CD4-positive, alpha-beta T cell (primary cell): ENCODE measurements at regions of chr19 and their contacts with region 1.

Region 1: GRCh38 chr19:36837906-36838783 is at the start of gene ZNF790:
- DNase-seq: peak; percentile 69 to 91 (median 78)
- ATAC-seq: peak; percentile 88
- H3K4me3 ChIP-seq: peak within 1 kb of the TSS; percentile 66
- H3K4me3 Mint-ChIP-seq: no peak within 1 kb of the TSS
- H3K27ac ChIP-seq: peak within 1 kb of the TSS; percentile 81 to 90
- H3K27ac Mint-ChIP-seq: no peak within 1 kb of the TSS
- H3K4me1 ChIP-seq: peaks cover 18% of the 10 kb centered on the region
- H3K4me1 Mint-ChIP-seq: peaks cover 9% of the 10 kb centered on the region
- H3K27me3 ChIP-seq: no peaks in the 10 kb centered on the region
- H3K27me3 Mint-ChIP-seq: no peaks in the 10 kb centered on the region
- CTCF ChIP-seq: no peak
- total RNA-seq, gene ZNF790: 2.9 to 3.5 TPM

Region 2: GRCh38 chr19:36489118-36489919 is 348.8 kb before region 1 on chr19 and contains the start of gene ZNF566:
- CTCF ChIA-PET with region 1: no interaction called
- POLR2A ChIA-PET with region 1: interaction called, 5 read pairs
- intact Hi-C with region 1: loop called in 1 of 2 experiments (anchors 10 kb)
- DNase-seq: peak; percentile 84 to 97 (median 89)
- ATAC-seq: peak; percentile 90
- H3K4me3 ChIP-seq: peak within 1 kb of the TSS; percentile 64
- H3K4me3 Mint-ChIP-seq: peak within 1 kb of the TSS; percentile 97
- H3K27ac ChIP-seq: peak within 1 kb of the TSS; percentile 84 to 87
- H3K27ac Mint-ChIP-seq: peak within 1 kb of the TSS; percentile 99
- H3K4me1 ChIP-seq: peaks cover 19% of the 10 kb centered on the region
- H3K4me1 Mint-ChIP-seq: peaks cover 36% of the 10 kb centered on the region
- H3K27me3 ChIP-seq: no peaks in the 10 kb centered on the region
- H3K27me3 Mint-ChIP-seq: no peaks in the 10 kb centered on the region
- CTCF ChIP-seq: no peak
- total RNA-seq, gene ZNF566: 6.3 to 6.8 TPM

Region 3: DNA sequence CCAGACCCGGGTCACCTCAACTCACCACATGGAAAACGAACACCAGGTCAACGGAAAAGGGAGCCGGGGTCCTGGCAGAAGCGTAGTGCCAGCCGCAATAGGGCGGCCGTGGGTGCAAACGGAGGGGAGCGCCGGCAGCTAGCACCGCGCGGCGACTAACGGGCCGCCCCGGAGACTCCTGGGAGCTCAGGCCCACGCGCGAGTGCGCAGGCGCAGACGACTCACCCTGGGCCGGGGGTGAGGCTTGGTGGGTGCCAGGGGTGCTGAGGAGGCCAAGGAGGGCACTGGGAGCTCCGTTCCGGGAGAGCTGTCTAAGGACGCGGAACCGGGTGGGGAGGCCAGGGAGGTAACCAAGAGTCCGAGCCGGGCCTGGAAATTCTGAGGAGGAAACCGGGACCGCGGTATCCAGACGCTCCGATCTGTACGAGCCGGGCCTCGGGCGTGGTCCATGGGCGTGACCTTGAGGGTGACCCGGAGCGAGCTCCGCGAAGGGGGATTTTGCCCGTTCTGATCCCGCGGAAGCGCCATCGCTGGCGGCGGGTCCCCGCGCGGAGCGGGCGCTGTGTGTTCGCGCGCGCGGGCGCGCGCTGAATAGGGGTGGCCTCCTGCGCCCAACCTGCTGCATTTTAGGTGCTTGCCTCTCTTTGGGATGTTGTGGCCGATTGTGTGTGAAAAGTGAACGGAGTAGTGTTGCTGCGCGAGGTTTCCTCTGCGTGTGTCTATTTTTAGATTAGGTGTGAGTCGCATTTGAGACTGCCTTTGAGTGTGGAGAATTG is 232.9 kb before region 1 on chr19 and contains the start of gene ZNF382:
- CTCF ChIA-PET with region 1: interaction called, 3 read pairs
- POLR2A ChIA-PET with region 1: interaction called, 6 read pairs
- intact Hi-C with region 1: loop called in 1 of 2 experiments (anchors 10 kb)
- DNase-seq: peak; percentile 74 to 92 (median 85)
- ATAC-seq: peak; percentile 75
- H3K4me3 ChIP-seq: peak within 1 kb of the TSS; percentile 87
- H3K4me3 Mint-ChIP-seq: peak within 1 kb of the TSS; percentile 85
- H3K27ac ChIP-seq: peak within 1 kb of the TSS; percentile 92 to 95
- H3K27ac Mint-ChIP-seq: peak within 1 kb of the TSS; percentile 83
- H3K4me1 ChIP-seq: peaks cover 10% of the 10 kb centered on the region
- H3K4me1 Mint-ChIP-seq: peaks cover 28% of the 10 kb centered on the region
- H3K27me3 ChIP-seq: no peaks in the 10 kb centered on the region
- H3K27me3 Mint-ChIP-seq: no peaks in the 10 kb centered on the region
- CTCF ChIP-seq: no peak
- total RNA-seq, gene ZNF382: 4.2 to 4.4 TPM

Region 4: GRCh38 chr19:36796076-36796992 is 41.8 kb before region 1 on chr19:
- CTCF ChIA-PET with region 1: no interaction called
- POLR2A ChIA-PET with region 1: interaction called, 13 read pairs
- intact Hi-C with region 1: loop called in 1 of 2 experiments (anchors 1 kb)
- DNase-seq: peak in 1 of 14 experiments; percentile 7
- ATAC-seq: no peak
- H3K4me3 ChIP-seq: peak overlapping the region; percentile 76
- H3K4me3 Mint-ChIP-seq: peak overlapping the region; percentile 100
- H3K27ac ChIP-seq: peak overlapping the region; percentile 63 to 67
- H3K27ac Mint-ChIP-seq: peak overlapping the region; percentile 99
- H3K4me1 ChIP-seq: peaks cover 14% of the 10 kb centered on the region
- H3K4me1 Mint-ChIP-seq: peaks cover 26% of the 10 kb centered on the region
- H3K27me3 ChIP-seq: no peaks in the 10 kb centered on the region
- H3K27me3 Mint-ChIP-seq: peaks cover 9% of the 10 kb centered on the region
- CTCF ChIP-seq: no peak

Region 5: DNA sequence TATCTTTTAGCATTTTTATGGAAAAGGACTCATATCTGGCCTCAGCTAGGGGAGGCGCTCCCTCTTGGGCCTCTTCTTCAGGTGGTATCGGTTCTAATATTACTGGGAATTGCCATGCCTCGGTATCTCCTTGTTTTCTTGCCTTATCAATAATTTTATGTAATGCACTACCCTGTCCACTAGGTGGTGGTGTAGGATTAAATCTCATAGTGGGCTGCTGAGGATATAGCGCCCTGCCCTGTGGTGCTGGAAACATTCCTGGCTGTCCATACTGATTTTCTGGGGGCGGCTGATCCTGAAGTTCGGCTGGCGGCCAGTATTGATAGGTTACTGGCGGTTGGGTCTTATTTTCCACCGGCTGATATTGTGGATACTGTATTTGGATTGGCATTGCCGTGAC is 275.9 kb after region 1 on chr19:
- CTCF ChIA-PET with region 1: no interaction called
- POLR2A ChIA-PET with region 1: no interaction called
- intact Hi-C with region 1: no loop called
- DNase-seq: no peak
- ATAC-seq: no peak
- H3K4me3 ChIP-seq: no peak overlapping the region
- H3K4me3 Mint-ChIP-seq: no peak overlapping the region
- H3K27ac ChIP-seq: no peak overlapping the region
- H3K27ac Mint-ChIP-seq: no peak overlapping the region
- H3K4me1 ChIP-seq: no peaks in the 10 kb centered on the region
- H3K4me1 Mint-ChIP-seq: no peaks in the 10 kb centered on the region
- H3K27me3 ChIP-seq: no peaks in the 10 kb centered on the region
- H3K27me3 Mint-ChIP-seq: no peaks in the 10 kb centered on the region
- CTCF ChIP-seq: peak; percentile 16

Region 6: GRCh38 chr19:37172368-37173366 is 334.5 kb after region 1 on chr19 and contains the start of gene ZNF585A:
- CTCF ChIA-PET with region 1: no interaction called
- POLR2A ChIA-PET with region 1: no interaction called
- intact Hi-C with region 1: loop called in 1 of 2 experiments (anchors 10 kb)
- DNase-seq: peak; percentile 83 to 98 (median 89)
- ATAC-seq: peak; percentile 99
- H3K4me3 ChIP-seq: peak within 1 kb of the TSS; percentile 77
- H3K4me3 Mint-ChIP-seq: no peak within 1 kb of the TSS
- H3K27ac ChIP-seq: peak within 1 kb of the TSS; percentile 63 to 73
- H3K27ac Mint-ChIP-seq: no peak within 1 kb of the TSS
- H3K4me1 ChIP-seq: peaks cover 11% of the 10 kb centered on the region
- H3K4me1 Mint-ChIP-seq: no peaks in the 10 kb centered on the region
- H3K27me3 ChIP-seq: no peaks in the 10 kb centered on the region
- H3K27me3 Mint-ChIP-seq: no peaks in the 10 kb centered on the region
- CTCF ChIP-seq: no peak
- total RNA-seq, gene ZNF585A: 4.5 to 4.6 TPM

Region 7: DNA sequence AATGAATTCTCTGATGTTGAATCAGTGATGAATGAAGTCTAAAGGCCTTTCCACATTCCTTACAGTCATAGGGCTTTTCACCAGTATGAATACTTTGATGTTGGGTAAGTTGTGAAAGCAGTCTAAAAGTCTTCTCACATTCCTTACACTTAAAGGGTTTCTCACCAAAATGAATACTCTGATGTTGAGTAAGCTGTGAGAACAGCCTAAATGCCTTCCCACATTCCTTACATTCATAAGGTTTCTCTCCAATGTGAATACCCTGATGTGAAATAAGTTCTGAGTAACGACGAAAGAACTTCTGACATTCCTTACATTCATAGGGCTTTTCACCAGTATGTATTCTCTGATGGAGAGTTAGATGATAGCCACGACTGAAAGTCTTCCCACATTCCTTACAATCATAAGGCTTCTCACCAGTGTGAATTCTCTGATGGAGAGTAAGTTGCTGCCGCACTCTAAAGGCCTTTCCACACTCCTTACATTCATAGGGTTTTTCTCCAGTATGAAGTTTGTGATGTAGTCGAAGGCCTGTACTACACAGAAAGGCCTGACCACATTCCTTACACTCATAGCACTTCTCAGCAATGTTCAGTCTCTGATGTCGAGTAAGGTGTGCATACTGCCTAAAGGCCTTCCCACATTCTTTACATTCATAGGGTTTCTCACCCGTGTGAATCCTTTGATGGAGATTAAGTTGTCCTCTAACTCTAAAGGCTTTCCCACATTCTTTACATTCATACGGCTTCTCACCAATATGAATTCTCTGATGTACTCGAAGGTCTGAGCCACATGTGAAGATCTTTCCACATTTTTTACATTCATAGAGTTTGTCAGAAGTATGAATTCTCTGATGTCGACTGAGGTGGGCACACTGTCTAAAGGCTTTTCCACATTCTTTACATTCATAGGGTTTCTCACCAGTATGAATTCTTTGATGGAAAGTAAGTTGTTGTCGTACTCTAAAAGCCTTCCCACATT is 797.2 kb after region 1 on chr19:
- CTCF ChIA-PET with region 1: no interaction called
- POLR2A ChIA-PET with region 1: no interaction called
- intact Hi-C with region 1: no loop called
- DNase-seq: no peak
- ATAC-seq: no peak
- H3K4me3 ChIP-seq: no peak overlapping the region
- H3K4me3 Mint-ChIP-seq: no peak overlapping the region
- H3K27ac ChIP-seq: no peak overlapping the region
- H3K27ac Mint-ChIP-seq: no peak overlapping the region
- H3K4me1 ChIP-seq: no peaks in the 10 kb centered on the region
- H3K4me1 Mint-ChIP-seq: no peaks in the 10 kb centered on the region
- H3K27me3 ChIP-seq: no peaks in the 10 kb centered on the region
- H3K27me3 Mint-ChIP-seq: no peaks in the 10 kb centered on the region
- CTCF ChIP-seq: no peak